ENCODE measurements at regions of chr3 and their contacts with region 1.

Region 1: GRCh38 chr3:99686955-99687612 is 48.7 kb downstream of the COL8A1 start:
- DNase-seq: peak; percentile 71
- H3K4me3 Mint-ChIP-seq: no peak overlapping the region
- H3K27ac Mint-ChIP-seq: no peak overlapping the region
- H3K4me1 Mint-ChIP-seq: no peaks in the 10 kb centered on the region
- H3K27me3 Mint-ChIP-seq: peaks cover 10% of the 10 kb centered on the region

Region 2: DNA sequence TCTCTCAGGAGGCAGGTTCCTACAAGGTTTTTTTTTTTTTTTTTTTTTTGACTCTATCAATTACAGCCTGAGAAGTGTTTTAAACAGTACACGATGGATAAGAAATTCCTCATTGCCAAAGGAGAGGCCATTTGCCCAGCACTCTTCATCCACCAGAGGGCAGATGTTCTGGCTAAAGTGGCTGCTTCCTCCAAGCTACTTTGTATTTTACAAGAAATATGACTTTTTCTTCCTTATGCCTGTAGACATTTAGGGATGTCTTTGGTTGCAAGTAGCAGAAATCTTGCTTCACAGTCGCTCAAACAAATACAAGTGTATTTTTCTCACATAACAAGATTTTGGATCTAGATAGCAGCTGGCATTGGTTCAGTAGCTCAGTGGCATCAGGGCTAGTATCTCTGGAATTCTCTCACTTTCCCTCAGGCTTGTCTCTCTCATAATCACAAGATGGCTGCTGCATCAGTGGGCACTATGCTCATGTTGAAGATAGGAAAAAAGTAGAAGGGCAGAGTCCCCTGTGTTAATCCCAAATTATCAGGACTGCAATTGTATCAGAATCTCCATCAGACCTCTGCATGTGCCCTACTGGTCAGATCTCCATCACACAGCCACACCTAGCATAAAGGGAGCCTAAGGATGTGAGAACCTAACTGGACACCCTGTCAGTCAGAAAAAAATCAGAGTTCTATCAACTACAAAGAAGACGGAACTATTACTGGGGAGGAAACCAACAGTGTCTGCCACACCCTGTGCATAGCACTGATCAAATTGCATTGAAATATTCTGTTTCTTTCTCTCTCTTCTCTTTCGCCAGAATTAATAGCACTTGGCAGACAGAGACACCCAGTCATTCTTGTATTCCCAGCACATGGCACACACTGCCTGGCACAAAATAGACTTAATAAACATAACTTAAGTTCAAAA is 187.6 kb before region 1 on chr3:
- CTCF ChIA-PET with region 1: interaction called, 3 read pairs
- intact Hi-C with region 1: loop called (anchors 1 kb)
- DNase-seq: peak; percentile 16
- H3K4me3 Mint-ChIP-seq: no peak overlapping the region
- H3K27ac Mint-ChIP-seq: no peak overlapping the region
- H3K4me1 Mint-ChIP-seq: no peaks in the 10 kb centered on the region
- H3K27me3 Mint-ChIP-seq: no peaks in the 10 kb centered on the region

Region 3: GRCh38 chr3:99637368-99638111 is 49.5 kb before region 1 on chr3:
- CTCF ChIA-PET with region 1: no interaction called
- intact Hi-C with region 1: loop called (anchors 2 kb)
- DNase-seq: peak; percentile 10
- H3K4me3 Mint-ChIP-seq: no peak overlapping the region
- H3K27ac Mint-ChIP-seq: no peak overlapping the region
- H3K4me1 Mint-ChIP-seq: peaks cover 20% of the 10 kb centered on the region
- H3K27me3 Mint-ChIP-seq: peaks cover 58% of the 10 kb centered on the region

Region 4: DNA sequence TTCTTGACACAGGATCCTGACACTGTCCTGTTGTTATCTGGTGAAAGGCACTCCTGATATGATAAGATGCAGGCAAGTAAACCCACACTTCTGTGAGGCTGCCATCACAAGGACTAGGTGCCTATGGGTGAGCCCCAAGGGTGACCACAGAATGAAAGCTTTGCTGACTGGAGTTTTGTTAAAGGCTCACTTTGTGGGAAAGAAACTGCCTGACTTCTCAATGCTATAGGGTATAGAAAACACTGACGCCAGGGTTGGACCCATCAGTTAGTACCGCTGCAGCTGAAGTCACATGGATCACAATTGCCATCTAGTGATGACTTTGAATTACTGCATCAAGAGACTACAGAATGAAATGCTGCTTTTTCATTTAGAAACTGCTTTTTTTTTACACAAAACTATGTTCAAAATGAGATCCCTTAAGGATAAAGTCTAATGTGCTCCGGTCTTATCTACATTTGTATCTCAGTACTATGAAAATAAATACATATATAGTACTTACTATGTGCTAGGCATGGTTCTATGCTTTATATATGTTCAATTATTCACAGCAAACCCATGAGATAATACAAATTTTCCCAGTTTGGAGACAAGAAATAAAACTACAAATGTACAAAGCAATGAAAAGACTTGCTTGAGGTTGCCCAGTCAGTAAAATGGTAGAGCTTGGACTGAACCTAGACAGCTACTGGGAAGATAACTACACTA is 66.3 kb after region 1 on chr3:
- CTCF ChIA-PET with region 1: no interaction called
- intact Hi-C with region 1: loop called (anchors 1 kb)
- DNase-seq: peak; percentile 28
- H3K4me3 Mint-ChIP-seq: no peak overlapping the region
- H3K27ac Mint-ChIP-seq: no peak overlapping the region
- H3K4me1 Mint-ChIP-seq: no peaks in the 10 kb centered on the region
- H3K27me3 Mint-ChIP-seq: peaks cover 4% of the 10 kb centered on the region

Measured in activated naive CD4-positive, alpha-beta T cell treated with anti-CD3 and anti-CD28 coated beads for 36 hours (primary cell).